ENCODE measurements at regions of chr14 and their contacts with region 1.

Region 1: DNA sequence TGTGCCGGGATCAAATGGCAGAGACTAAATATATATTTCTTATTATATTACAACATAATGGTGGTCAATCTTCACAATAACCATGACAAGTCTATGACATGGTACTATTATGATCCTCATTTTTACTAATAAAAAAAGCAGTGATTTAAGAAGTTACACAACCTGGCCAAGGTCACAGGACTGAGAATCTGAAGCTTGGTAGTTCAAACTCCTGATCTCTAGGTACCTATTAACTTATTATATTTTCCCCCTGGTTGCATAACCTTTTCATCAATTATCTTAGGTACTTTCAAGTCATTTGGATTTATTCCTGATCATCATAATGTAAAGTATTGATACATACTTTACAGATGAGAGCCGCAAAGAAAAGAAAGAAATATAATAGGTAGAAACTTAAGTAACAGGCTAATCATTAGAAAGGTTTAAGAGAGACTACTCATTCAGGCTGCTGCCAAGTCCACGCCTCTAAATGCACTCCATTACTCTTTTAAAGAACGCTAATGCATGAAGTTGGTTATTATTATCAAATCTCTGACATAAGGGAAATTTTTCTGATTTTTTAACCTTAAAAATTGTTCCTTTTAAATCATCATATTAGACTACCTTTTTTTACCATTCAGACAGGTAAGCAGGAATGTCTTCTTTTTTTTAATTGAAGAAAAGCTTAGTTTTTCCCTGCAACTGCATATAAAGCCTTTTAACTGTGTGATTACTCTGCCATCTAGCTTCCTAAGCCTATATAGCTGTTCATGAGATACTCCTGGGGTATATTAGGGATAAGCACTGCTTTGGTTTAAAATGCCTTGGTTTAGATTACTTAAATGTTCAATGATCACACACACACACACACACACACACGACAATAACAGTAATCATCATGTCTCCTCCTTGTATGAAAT is 35.6 kb downstream of the RPS29 start:
- DNase-seq: peak in 1 of 2 experiments; percentile 27
- H3K4me3 ChIP-seq: no peak overlapping the region
- H3K4me3 Mint-ChIP-seq: no peak overlapping the region
- H3K27ac Mint-ChIP-seq: no peak overlapping the region
- H3K4me1 ChIP-seq: peaks cover 9% of the 10 kb centered on the region
- H3K4me1 Mint-ChIP-seq: peaks cover 6% of the 10 kb centered on the region
- H3K27me3 ChIP-seq: no peaks in the 10 kb centered on the region
- H3K27me3 Mint-ChIP-seq: no peaks in the 10 kb centered on the region
- CTCF ChIP-seq: peak in 1 of 2 experiments; percentile 55

Region 2: GRCh38 chr14:49461529-49462401 is 88.8 kb before region 1 on chr14:
- CTCF ChIA-PET with region 1: interaction called, 68 read pairs
- POLR2A ChIA-PET with region 1: interaction called, 3 read pairs
- intact Hi-C with region 1: loop called (anchors 1 kb)
- DNase-seq: peak; percentile 52 to 76
- H3K4me3 ChIP-seq: no peak overlapping the region
- H3K4me3 Mint-ChIP-seq: no peak overlapping the region
- H3K27ac Mint-ChIP-seq: no peak overlapping the region
- H3K4me1 ChIP-seq: peaks cover 6% of the 10 kb centered on the region; the same call in 1 of the 2 replicates
- H3K4me1 Mint-ChIP-seq: no peaks in the 10 kb centered on the region
- H3K27me3 ChIP-seq: no peaks in the 10 kb centered on the region
- H3K27me3 Mint-ChIP-seq: no peaks in the 10 kb centered on the region
- CTCF ChIP-seq: peak; percentile 55 to 60

Region 3: GRCh38 chr14:49497725-49498348 is 52.7 kb before region 1 on chr14:
- CTCF ChIA-PET with region 1: interaction called, 29 read pairs
- POLR2A ChIA-PET with region 1: no interaction called
- intact Hi-C with region 1: no loop called
- DNase-seq: peak in 1 of 2 experiments; percentile 69
- H3K4me3 ChIP-seq: no peak overlapping the region
- H3K4me3 Mint-ChIP-seq: no peak overlapping the region
- H3K27ac Mint-ChIP-seq: no peak overlapping the region
- H3K4me1 ChIP-seq: no peaks in the 10 kb centered on the region
- H3K4me1 Mint-ChIP-seq: peaks cover 13% of the 10 kb centered on the region
- H3K27me3 ChIP-seq: no peaks in the 10 kb centered on the region
- H3K27me3 Mint-ChIP-seq: no peaks in the 10 kb centered on the region
- CTCF ChIP-seq: peak; percentile 74 to 84

Region 4: DNA sequence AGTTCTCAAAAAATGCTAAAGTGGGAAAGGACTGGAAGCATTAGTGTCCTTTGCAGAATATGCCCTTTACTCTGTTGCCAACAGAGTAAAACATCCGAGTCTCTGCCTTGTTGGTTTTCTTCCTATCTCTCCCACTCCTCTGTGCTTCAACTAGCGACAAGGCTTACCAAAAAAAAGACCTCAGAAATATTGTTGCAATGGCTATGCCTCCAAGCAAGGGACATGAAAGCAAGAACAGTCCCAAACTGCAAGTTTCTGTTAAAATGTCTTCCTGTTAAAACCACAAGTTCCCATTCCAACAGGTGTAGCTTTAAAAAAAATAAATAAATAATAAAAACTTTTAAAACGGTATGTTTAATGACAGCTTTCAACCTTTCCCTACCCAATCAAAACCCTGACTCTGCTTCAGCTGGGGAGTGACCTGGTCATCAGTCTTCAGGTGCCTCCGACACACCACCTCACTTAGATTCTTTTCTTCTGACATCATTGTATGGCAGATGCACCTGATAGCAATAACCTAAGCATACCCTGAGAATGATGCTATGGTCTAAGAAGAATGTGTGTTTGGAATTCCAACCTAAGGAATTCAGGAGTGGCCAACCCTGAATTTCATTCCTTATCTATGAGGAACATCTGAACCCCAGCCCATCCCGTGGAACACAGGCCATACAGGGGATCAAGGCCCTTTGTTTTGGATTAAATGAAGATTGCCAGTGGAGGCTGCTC is 45.3 kb before region 1 on chr14:
- CTCF ChIA-PET with region 1: interaction called, 3 read pairs
- POLR2A ChIA-PET with region 1: no interaction called
- intact Hi-C with region 1: loop called (anchors 2 kb)
- DNase-seq: peak; percentile 83 to 86
- H3K4me3 ChIP-seq: no peak overlapping the region
- H3K4me3 Mint-ChIP-seq: peak overlapping the region; percentile 52
- H3K27ac Mint-ChIP-seq: peak overlapping the region; percentile 95
- H3K4me1 ChIP-seq: peaks cover 42% of the 10 kb centered on the region
- H3K4me1 Mint-ChIP-seq: peaks cover 37% of the 10 kb centered on the region
- H3K27me3 ChIP-seq: no peaks in the 10 kb centered on the region
- H3K27me3 Mint-ChIP-seq: no peaks in the 10 kb centered on the region
- CTCF ChIP-seq: no peak

Region 5: DNA sequence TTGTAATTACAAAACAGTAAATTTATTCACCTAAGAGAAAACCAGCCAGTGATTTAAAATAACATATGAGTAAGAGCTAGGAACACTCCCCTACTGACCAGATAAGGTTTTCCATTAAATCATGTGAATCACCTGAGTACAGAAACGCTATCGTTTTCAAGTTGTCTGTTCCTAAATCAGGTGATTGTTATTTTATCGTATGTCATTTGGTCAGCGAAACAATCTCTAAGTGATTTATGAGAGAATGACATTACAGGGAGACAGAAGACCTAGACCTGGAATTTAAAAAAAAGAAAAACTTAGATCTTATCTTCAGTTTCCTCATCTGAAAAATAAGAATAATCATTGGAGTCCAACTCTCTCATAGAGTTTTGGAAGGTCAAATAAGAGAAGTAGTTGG is 11.6 kb before region 1 on chr14:
- CTCF ChIA-PET with region 1: no interaction called
- POLR2A ChIA-PET with region 1: no interaction called
- intact Hi-C with region 1: no loop called
- DNase-seq: no peak
- H3K4me3 ChIP-seq: no peak overlapping the region
- H3K4me3 Mint-ChIP-seq: no peak overlapping the region
- H3K27ac Mint-ChIP-seq: no peak overlapping the region
- H3K4me1 ChIP-seq: no peaks in the 10 kb centered on the region
- H3K4me1 Mint-ChIP-seq: no peaks in the 10 kb centered on the region
- H3K27me3 ChIP-seq: no peaks in the 10 kb centered on the region
- H3K27me3 Mint-ChIP-seq: no peaks in the 10 kb centered on the region
- CTCF ChIP-seq: no peak

Measured in Caco-2 (cell line).